ENCODE measurements at regions of chr20 and their contacts with region 1.

Region 1: GRCh38 chr20:31712564-31713311 is 9.9 kb downstream of the BCL2L1 start:
- DNase-seq: no peak
- H3K4me3 ChIP-seq: no peak overlapping the region
- H3K4me3 Mint-ChIP-seq: peak overlapping the region in 4 of 7 donors; percentile 12 to 57 (median 45)
- H3K27ac ChIP-seq: peak overlapping the region; percentile 28
- H3K27ac Mint-ChIP-seq: peak overlapping the region in 7 of 8 donors; percentile 49 to 89 (median 85)
- H3K4me1 ChIP-seq: peaks cover 76% of the 10 kb centered on the region
- H3K4me1 Mint-ChIP-seq: peaks cover 81 to 97% (median 95%) of the 10 kb centered on the region in 3 donors
- H3K27me3 ChIP-seq: no peaks in the 10 kb centered on the region
- H3K27me3 Mint-ChIP-seq: no peaks in the 10 kb centered on the region

Region 2: GRCh38 chr20:31602779-31603441 is 109.8 kb before region 1 on chr20:
- CTCF ChIA-PET with region 1: no interaction called
- POLR2A ChIA-PET with region 1: no interaction called
- DNase-seq: peak in 4 of 5 donors; percentile 21 to 75 (median 36)
- H3K4me3 ChIP-seq: no peak overlapping the region
- H3K4me3 Mint-ChIP-seq: peak overlapping the region; percentile 33 to 81 (median 60)
- H3K27ac ChIP-seq: no peak overlapping the region
- H3K27ac Mint-ChIP-seq: peak overlapping the region in 7 of 8 donors; percentile 41 to 85 (median 63)
- H3K4me1 ChIP-seq: peaks cover 16% of the 10 kb centered on the region
- H3K4me1 Mint-ChIP-seq: peaks cover 26 to 37% (median 28%) of the 10 kb centered on the region in 3 donors
- H3K27me3 ChIP-seq: peaks cover 17% of the 10 kb centered on the region
- H3K27me3 Mint-ChIP-seq: peaks cover 28 to 41% of the 10 kb centered on the region in 2 donors

Region 3: GRCh38 chr20:31674895-31675827 is 37.6 kb before region 1 on chr20:
- CTCF ChIA-PET with region 1: interaction called, 14 read pairs
- POLR2A ChIA-PET with region 1: interaction called, 4 read pairs
- DNase-seq: peak; percentile 59 to 77 (median 67)
- H3K4me3 ChIP-seq: peak overlapping the region; percentile 80
- H3K4me3 Mint-ChIP-seq: peak overlapping the region; percentile 88 to 97 (median 94)
- H3K27ac ChIP-seq: peak overlapping the region; percentile 86
- H3K27ac Mint-ChIP-seq: peak overlapping the region; percentile 95 to 100 (median 98)
- H3K4me1 ChIP-seq: peaks cover 79% of the 10 kb centered on the region
- H3K4me1 Mint-ChIP-seq: peaks cover 76 to 87% (median 77%) of the 10 kb centered on the region in 3 donors
- H3K27me3 ChIP-seq: no peaks in the 10 kb centered on the region
- H3K27me3 Mint-ChIP-seq: no peaks in the 10 kb centered on the region

Measured in CD8-positive, alpha-beta memory T cell (primary cell).